Mammary epithelial cell (primary cell): ENCODE measurements at regions of chrX and their contacts with region 1.

Region 1: GRCh38 chrX:46758906-46759644 is at the start of gene SLC9A7:
- DNase-seq: peak; percentile 72
- H3K4me3 ChIP-seq: peak within 1 kb of the TSS; percentile 56 to 79 (median 64)
- H3K27ac ChIP-seq: peak within 1 kb of the TSS; percentile 17
- H3K4me1 ChIP-seq: peaks cover 5% of the 10 kb centered on the region
- H3K27me3 ChIP-seq: no peaks in the 10 kb centered on the region
- CTCF ChIP-seq: peak; percentile 60 to 88
- total RNA-seq, gene SLC9A7: 32.4 to 72.7 TPM

Region 2: DNA sequence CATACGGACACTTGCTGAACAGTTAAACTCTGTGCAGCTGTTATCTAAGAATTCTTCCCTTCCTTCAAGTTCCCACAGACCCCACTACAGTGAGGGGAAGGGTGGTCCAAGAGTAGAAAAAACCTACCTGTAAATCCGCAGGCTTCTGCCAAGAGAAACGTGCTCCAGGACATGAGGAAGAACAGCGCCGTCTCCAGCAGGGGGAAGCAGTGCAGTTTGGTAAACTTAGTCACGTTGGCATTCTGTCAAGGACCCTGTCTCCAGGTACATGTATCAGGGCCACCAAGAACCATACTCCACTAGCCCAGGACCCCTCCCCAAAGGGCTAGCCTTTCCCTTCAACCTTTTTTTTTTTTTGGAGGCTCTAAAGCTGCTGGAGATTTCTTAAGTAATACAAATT is 105.6 kb before region 1 on chrX:
- CTCF ChIA-PET with region 1: no interaction called
- dilution Hi-C with region 1: no loop called
- in situ Hi-C with region 1: no loop called
- intact Hi-C with region 1: loop called (anchors 5 kb)
- DNase-seq: no peak
- H3K4me3 ChIP-seq: no peak overlapping the region
- H3K27ac ChIP-seq: no peak overlapping the region
- H3K4me1 ChIP-seq: peaks cover 8% of the 10 kb centered on the region
- H3K27me3 ChIP-seq: no peaks in the 10 kb centered on the region
- CTCF ChIP-seq: peak; percentile 41 to 63

Region 3: DNA sequence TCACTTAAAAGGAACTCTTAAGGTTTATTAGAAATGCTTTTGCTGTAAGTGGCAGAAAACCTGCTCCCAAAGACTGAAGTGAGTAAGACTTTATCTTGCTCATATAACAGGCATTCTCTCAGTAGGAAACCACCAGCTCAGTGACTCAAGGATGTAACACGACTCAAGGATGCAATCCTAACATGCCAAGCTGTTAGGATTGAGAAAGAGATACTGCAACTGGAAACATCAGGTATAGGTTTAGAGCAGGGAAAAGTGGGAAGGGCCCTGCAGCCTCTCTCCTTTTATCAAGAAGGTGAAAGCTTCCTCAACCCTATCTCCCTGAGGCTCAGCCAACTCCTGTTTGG is 11.7 kb after region 1 on chrX:
- CTCF ChIA-PET with region 1: no interaction called
- dilution Hi-C with region 1: no loop called
- in situ Hi-C with region 1: no loop called
- intact Hi-C with region 1: loop called (anchors 1 kb)
- DNase-seq: peak; percentile 88
- H3K4me3 ChIP-seq: no peak overlapping the region
- H3K27ac ChIP-seq: peak overlapping the region; percentile 65
- H3K4me1 ChIP-seq: peaks cover 18% of the 10 kb centered on the region
- H3K27me3 ChIP-seq: no peaks in the 10 kb centered on the region
- CTCF ChIP-seq: no peak

Region 4: DNA sequence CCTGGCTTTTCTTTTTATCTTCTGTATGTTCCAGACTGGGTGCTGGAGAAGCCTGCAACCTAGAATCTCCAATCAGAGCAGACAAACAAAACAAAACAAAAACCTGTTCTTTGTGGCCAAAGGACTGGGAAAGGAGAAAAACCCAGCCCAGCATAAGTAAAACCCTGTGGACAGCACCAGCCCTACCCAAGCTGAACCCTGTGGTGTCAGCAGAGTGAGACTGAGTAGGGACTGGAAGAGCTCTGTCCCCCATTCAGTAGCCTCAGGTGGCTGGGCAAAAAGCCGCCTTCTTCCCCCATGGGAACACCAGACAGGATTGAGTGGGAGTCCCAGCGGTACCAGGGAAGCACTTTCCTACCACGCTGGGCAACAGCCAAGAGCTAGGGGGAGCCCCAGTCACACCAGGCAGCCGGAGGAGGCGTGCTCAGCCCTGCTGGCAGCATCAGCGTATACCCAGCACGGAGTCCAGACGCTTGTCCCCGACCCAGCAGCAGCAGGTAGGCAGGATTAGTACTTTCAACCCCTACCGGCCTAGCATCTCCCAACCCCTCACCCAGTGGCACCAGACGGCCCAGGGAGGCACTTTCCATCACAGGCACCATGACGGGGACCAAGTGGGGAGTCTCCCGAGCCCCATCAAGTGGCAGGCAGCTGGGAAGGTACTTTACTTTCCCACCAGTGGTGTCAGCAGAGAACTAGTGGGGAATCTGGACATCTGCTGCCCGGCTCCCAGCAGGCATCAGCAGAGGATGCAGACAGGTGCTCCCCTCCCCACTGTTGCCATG is 144.6 kb after region 1 on chrX:
- CTCF ChIA-PET with region 1: no interaction called
- dilution Hi-C with region 1: no loop called
- in situ Hi-C with region 1: no loop called
- intact Hi-C with region 1: loop called (anchors 1 kb)
- DNase-seq: peak; percentile 65
- H3K4me3 ChIP-seq: peak overlapping the region in 2 of 3 experiments; percentile 50 to 56
- H3K27ac ChIP-seq: no peak overlapping the region
- H3K4me1 ChIP-seq: no peaks in the 10 kb centered on the region
- H3K27me3 ChIP-seq: no peaks in the 10 kb centered on the region
- CTCF ChIP-seq: peak; percentile 22 to 76

Region 5: DNA sequence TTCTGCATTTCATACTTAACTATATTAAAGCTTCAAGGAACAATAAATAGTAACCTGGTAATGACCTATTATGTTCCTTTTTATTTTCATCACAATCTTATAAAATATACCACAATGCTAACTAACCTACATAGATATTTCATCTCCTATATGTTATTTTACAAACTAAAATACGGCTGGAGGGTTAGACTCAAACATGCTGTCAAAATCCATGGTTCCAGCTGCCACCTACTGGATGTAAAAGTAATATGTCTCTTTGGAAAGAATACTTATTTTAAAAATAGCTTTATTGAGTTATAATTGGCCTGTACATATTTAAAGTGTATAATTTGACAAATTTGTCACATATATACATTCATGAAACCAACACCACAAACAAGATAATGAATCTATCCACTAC is 334.2 kb after region 1 on chrX:
- CTCF ChIA-PET with region 1: no interaction called
- dilution Hi-C with region 1: no loop called
- in situ Hi-C with region 1: no loop called
- intact Hi-C with region 1: loop called (anchors 2 kb)
- DNase-seq: peak; percentile 12
- H3K4me3 ChIP-seq: no peak overlapping the region
- H3K27ac ChIP-seq: no peak overlapping the region
- H3K4me1 ChIP-seq: no peaks in the 10 kb centered on the region
- H3K27me3 ChIP-seq: no peaks in the 10 kb centered on the region
- CTCF ChIP-seq: peak; percentile 38 to 53